Right cardiac atrium (tissue), 5 donors: ENCODE measurements at regions of chr17 and their contacts with region 1.

Region 1: GRCh38 chr17:17890773-17891759 is 54.3 kb upstream of the SREBF1 start:
- DNase-seq: peak; percentile 55 to 72 (median 72)
- ATAC-seq: peak; percentile 60 to 72
- H3K4me3 ChIP-seq: no peak overlapping the region
- H3K27ac ChIP-seq: no peak overlapping the region
- H3K4me1 ChIP-seq: peaks cover 6% of the 10 kb centered on the region
- H3K27me3 ChIP-seq: no peaks in the 10 kb centered on the region

Region 2: GRCh38 chr17:17729620-17730249 is 161.3 kb before region 1 on chr17:
- intact Hi-C with region 1: no loop called
- DNase-seq: peak in 2 of 3 donors; percentile 27
- ATAC-seq: peak in 1 of 2 donors; percentile 22
- H3K4me3 ChIP-seq: no peak overlapping the region
- H3K27ac ChIP-seq: peak overlapping the region; percentile 5
- H3K4me1 ChIP-seq: peaks cover 11% of the 10 kb centered on the region
- H3K27me3 ChIP-seq: no peaks in the 10 kb centered on the region

Region 3: GRCh38 chr17:17950806-17951205 is 59.7 kb after region 1 on chr17:
- intact Hi-C with region 1: no loop called
- DNase-seq: no peak
- ATAC-seq: no peak
- H3K4me3 ChIP-seq: no peak overlapping the region
- H3K27ac ChIP-seq: no peak overlapping the region
- H3K4me1 ChIP-seq: peaks cover 9% of the 10 kb centered on the region
- H3K27me3 ChIP-seq: no peaks in the 10 kb centered on the region

Region 4: GRCh38 chr17:18025945-18026776 is 135.1 kb after region 1 on chr17:
- intact Hi-C with region 1: loop called in 3 of 4 experiments (anchors 10 kb)
- DNase-seq: peak; percentile 38 to 69 (median 63)
- ATAC-seq: peak; percentile 62 to 67
- H3K4me3 ChIP-seq: no peak overlapping the region
- H3K27ac ChIP-seq: peak overlapping the region; percentile 34
- H3K4me1 ChIP-seq: no peaks in the 10 kb centered on the region
- H3K27me3 ChIP-seq: no peaks in the 10 kb centered on the region